CD4-positive, alpha-beta memory T cell (primary cell): ENCODE measurements at regions of chr7 and their contacts with region 1.

Region 1: GRCh38 chr7:75762314-75762917 is 9.6 kb downstream of the CCL26 start:
- DNase-seq: peak in 4 of 5 donors; percentile 50 to 58 (median 54)
- H3K4me3 ChIP-seq: no peak overlapping the region
- H3K4me3 Mint-ChIP-seq: no peak overlapping the region
- H3K27ac ChIP-seq: no peak overlapping the region
- H3K27ac Mint-ChIP-seq: no peak overlapping the region
- H3K4me1 ChIP-seq: no peaks in the 10 kb centered on the region
- H3K4me1 Mint-ChIP-seq: peaks cover 2 to 4% (median 4%) of the 10 kb centered on the region in 4 donors
- H3K27me3 ChIP-seq: no peaks in the 10 kb centered on the region
- H3K27me3 Mint-ChIP-seq: peaks cover 0 to 4% of the 10 kb centered on the region in 2 donors

Region 2: DNA sequence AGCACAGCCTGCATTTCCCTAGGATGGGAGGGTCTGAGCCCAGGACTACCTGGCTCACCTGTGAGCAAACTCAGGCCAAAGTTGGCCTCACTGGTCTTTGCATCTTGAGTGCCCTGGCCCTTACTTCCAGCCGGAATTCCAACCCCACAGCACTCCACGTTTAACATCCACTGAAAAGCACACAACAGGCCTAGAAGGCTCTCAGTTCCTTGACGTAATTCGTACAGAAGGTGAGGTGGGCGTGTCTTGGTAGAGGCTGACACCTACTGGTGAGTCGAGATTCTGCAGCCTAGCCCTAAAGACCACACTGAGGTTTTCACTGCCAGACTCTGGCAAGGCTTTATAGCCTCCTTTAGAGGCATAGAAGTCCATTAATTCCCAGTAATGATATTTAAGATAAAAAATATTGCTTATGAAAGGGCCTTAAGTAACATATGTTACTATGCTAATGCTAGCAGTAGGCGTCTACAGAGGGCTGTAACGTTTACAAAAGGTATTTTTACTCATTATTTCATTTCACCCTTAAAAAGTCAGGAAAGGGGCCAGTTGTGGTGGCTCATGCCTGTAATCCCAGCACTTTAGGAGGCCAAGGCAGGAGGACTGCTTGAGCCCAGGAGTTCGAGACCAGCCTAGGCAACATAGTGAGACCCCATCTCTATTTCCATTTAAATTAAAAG is 119.5 kb before region 1 on chr7:
- CTCF ChIA-PET with region 1: interaction called, 5 read pairs
- POLR2A ChIA-PET with region 1: no interaction called
- intact Hi-C with region 1: loop called (anchors 1 kb)
- DNase-seq: peak; percentile 59 to 70 (median 64)
- H3K4me3 ChIP-seq: no peak overlapping the region
- H3K4me3 Mint-ChIP-seq: peak overlapping the region in 3 of 8 donors; percentile 22 to 82 (median 36)
- H3K27ac ChIP-seq: no peak overlapping the region
- H3K27ac Mint-ChIP-seq: peak overlapping the region in 2 of 7 donors; percentile 71 to 83
- H3K4me1 ChIP-seq: peaks cover 8% of the 10 kb centered on the region
- H3K4me1 Mint-ChIP-seq: peaks cover 5 to 20% (median 9%) of the 10 kb centered on the region in 4 donors
- H3K27me3 ChIP-seq: no peaks in the 10 kb centered on the region
- H3K27me3 Mint-ChIP-seq: no peaks in the 10 kb centered on the region

Region 3: GRCh38 chr7:75667938-75668337 is 94.5 kb before region 1 on chr7:
- CTCF ChIA-PET with region 1: no interaction called
- POLR2A ChIA-PET with region 1: no interaction called
- intact Hi-C with region 1: no loop called
- DNase-seq: no peak
- H3K4me3 ChIP-seq: no peak overlapping the region
- H3K4me3 Mint-ChIP-seq: no peak overlapping the region
- H3K27ac ChIP-seq: no peak overlapping the region
- H3K27ac Mint-ChIP-seq: peak overlapping the region in 1 of 7 donors; percentile 14
- H3K4me1 ChIP-seq: no peaks in the 10 kb centered on the region
- H3K4me1 Mint-ChIP-seq: peaks cover 2% of the 10 kb centered on the region in 4 donors
- H3K27me3 ChIP-seq: no peaks in the 10 kb centered on the region
- H3K27me3 Mint-ChIP-seq: no peaks in the 10 kb centered on the region